ENCODE measurements at regions of chr13 and their contacts with region 1.

Region 1: GRCh38 chr13:24220086-24220703 is 59.7 kb downstream of the SPATA13 start:
- DNase-seq: peak; percentile 70
- ATAC-seq: peak; percentile 94
- H3K4me3 ChIP-seq: no peak overlapping the region
- H3K27ac ChIP-seq: no peak overlapping the region
- H3K4me1 ChIP-seq: peaks cover 11 to 13% of the 10 kb centered on the region in 2 experiments; a peak in 3 of 4 replicates
- H3K27me3 ChIP-seq: no peaks in the 10 kb centered on the region
- CTCF ChIP-seq: peak; percentile 69 to 83 (median 81)
- POLR2A ChIP-seq: no peak
- RAD21 ChIP-seq: peak; percentile 91

Region 2: DNA sequence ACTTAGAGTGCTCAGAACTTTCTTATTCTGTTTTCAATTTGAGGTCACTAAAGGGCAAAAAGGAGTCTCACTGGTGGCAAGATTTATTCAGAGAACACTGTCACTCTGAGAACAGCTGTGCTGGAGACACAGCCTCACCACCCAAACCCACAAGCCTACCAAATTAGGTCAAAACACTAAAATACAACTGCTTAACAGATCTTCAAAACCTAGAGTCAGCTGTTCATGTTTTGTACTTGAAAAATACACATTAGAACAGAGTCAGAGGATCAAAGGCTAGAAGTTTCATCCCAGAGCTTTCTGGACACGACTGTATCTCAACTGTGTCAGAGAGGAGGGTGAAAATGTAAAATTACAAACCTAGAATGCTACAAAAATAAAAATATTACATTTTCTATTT is 420.2 kb before region 1 on chr13:
- CTCF ChIA-PET with region 1: no interaction called
- POLR2A ChIA-PET with region 1: no interaction called
- RAD21 ChIA-PET with region 1: no interaction called
- intact Hi-C with region 1: no loop called
- DNase-seq: no peak
- ATAC-seq: no peak
- H3K4me3 ChIP-seq: no peak overlapping the region
- H3K27ac ChIP-seq: no peak overlapping the region
- H3K4me1 ChIP-seq: peaks cover 1 to 10% of the 10 kb centered on the region in 2 experiments; a peak in 1 of 4 replicates
- H3K27me3 ChIP-seq: no peaks in the 10 kb centered on the region
- CTCF ChIP-seq: no peak
- POLR2A ChIP-seq: no peak
- RAD21 ChIP-seq: no peak

Region 3: DNA sequence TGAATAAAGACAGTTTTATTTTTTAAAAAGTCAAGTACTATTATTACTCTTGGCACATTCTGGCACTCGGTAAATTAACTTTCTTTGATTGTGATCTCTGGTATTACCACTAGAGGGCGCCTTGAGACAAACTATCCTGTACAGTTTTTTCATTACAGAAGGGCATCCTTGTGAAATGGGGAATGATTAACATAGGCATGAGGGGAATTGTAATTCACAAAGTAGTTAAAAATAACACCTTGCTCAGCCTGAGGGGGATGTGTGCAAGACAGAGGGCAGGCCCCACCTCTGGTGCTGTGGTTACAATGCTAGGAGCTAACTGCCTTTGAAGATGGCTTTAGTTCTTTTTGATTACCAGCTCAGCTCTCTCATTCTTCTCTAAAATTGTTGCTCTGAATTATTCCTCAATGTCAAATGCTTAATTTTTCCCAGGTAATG is 298.7 kb before region 1 on chr13:
- CTCF ChIA-PET with region 1: interaction called, 5 read pairs
- POLR2A ChIA-PET with region 1: no interaction called
- RAD21 ChIA-PET with region 1: no interaction called
- intact Hi-C with region 1: loop called (anchors 2 kb)
- DNase-seq: peak; percentile 23
- ATAC-seq: peak; percentile 57
- H3K4me3 ChIP-seq: no peak overlapping the region
- H3K27ac ChIP-seq: no peak overlapping the region
- H3K4me1 ChIP-seq: no peaks in the 10 kb centered on the region
- H3K27me3 ChIP-seq: peaks cover 38% of the 10 kb centered on the region
- CTCF ChIP-seq: peak; percentile 49 to 91 (median 60); a peak in 4 of 6 replicates
- POLR2A ChIP-seq: no peak
- RAD21 ChIP-seq: peak; percentile 73

Region 4: DNA sequence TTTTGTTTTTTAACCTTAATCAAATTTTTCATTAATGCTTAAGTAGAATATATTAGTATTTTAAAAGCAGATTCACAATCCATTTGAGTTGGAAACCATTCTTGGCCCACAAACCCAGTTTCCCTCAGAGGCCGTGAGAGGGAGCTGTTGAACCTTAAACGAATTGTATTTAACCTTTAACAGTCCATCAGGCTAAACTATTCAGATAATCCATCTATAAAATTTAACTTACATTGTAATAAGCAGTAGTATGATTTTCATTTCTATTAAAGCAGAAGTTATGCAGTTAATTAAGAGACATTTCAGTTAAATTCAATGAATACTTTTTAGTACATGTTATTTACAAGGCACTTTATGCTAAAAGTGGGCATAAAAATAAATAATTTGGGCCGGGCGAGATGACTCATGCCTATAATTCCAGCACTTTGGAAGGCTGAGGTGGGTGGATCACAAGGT is 199.8 kb before region 1 on chr13:
- CTCF ChIA-PET with region 1: interaction called, 51 read pairs
- POLR2A ChIA-PET with region 1: interaction called, 3 read pairs
- RAD21 ChIA-PET with region 1: no interaction called
- intact Hi-C with region 1: loop called (anchors 1 kb)
- DNase-seq: peak; percentile 64
- ATAC-seq: peak; percentile 84
- H3K4me3 ChIP-seq: no peak overlapping the region
- H3K27ac ChIP-seq: no peak overlapping the region
- H3K4me1 ChIP-seq: no peaks in the 10 kb centered on the region
- H3K27me3 ChIP-seq: no peaks in the 10 kb centered on the region
- CTCF ChIP-seq: peak; percentile 70 to 81 (median 81); a peak in 5 of 6 replicates
- POLR2A ChIP-seq: no peak
- RAD21 ChIP-seq: peak; percentile 80

Region 5: DNA sequence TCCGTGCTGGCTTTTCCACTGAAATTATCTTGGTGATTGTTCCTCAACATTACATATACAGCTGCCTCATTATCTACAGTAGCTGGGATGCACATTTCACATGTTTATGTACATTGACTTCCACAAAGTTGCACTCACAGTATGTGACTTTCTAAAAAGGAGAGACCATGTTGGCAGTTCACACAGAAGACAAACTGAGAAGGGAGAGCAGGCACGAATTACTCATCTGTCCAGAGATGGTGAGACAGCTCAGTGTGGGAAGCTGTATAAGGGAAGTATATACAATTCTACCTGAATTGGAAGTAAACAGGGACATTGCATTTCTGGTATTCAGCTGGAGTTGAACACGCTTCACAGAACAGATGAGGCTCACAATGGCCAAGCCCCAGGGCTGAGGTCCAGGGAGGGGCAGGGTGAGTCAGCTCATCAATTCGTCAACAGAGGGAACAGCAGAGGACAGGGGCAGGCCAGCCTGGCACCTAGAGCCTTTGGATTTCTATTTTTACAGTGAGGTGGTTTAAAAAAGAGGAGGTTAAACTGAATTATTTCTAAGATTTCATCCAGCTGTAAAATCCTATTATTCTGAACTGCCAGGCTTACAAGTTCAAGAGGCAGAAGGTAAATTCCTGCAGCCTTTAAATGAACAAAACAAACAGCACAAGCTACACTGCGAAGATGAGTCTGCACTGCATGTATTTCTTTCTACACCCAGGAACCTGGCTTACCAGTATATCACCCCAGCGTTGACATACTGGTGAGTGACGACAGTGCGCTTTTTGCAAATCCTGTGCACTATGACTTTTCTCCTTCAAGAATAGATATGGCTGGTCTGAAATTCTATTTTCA is 282.6 kb after region 1 on chr13:
- CTCF ChIA-PET with region 1: no interaction called
- POLR2A ChIA-PET with region 1: no interaction called
- RAD21 ChIA-PET with region 1: no interaction called
- intact Hi-C with region 1: no loop called
- DNase-seq: peak; percentile 29
- ATAC-seq: peak; percentile 97
- H3K4me3 ChIP-seq: peak overlapping the region in 1 of 2 experiments; percentile 13; a peak in 1 of 4 replicates
- H3K27ac ChIP-seq: peak overlapping the region; percentile 54
- H3K4me1 ChIP-seq: peaks cover 22 to 28% of the 10 kb centered on the region in 2 experiments
- H3K27me3 ChIP-seq: no peaks in the 10 kb centered on the region
- CTCF ChIP-seq: no peak
- POLR2A ChIP-seq: no peak
- RAD21 ChIP-seq: no peak